Transverse colon (tissue), 4 donors: ENCODE measurements at regions of chr9 and their contacts with region 1.

Region 1: GRCh38 chr9:21812946-21813568 is 10.6 kb downstream of the MTAP start:
- DNase-seq: peak; percentile 80
- H3K4me3 ChIP-seq: no peak overlapping the region
- H3K27ac ChIP-seq: peak overlapping the region in 2 of 4 donors; percentile 3 to 13
- H3K4me1 ChIP-seq: peaks cover 0 to 13% (median 6%) of the 10 kb centered on the region in 4 donors
- H3K27me3 ChIP-seq: no peaks in the 10 kb centered on the region
- CTCF ChIP-seq: peak; percentile 85 to 90 (median 87)
- EP300 ChIP-seq: no peak
- POLR2A ChIP-seq: no peak

Region 2: DNA sequence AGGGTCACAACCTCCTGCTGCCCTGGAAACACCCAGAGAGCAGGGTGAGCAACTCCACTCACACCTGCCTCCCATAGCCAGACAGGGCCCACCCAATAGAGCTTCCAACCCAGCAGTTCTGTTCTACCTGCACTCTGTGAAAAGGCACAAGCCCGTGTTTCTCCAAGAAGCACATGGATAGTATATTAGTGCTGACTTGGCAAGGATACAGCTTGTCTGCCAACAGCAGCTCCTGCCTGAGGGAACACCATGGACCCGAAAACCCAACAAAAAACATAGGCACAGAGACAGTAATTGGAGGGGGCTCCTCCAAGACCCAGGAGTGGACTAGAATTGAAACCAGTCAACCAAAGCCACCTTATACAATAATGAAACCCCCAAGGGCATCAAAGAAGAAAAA is 132.5 kb after region 1 on chr9:
- in situ Hi-C with region 1: no loop called
- intact Hi-C with region 1: no loop called
- DNase-seq: no peak
- H3K4me3 ChIP-seq: no peak overlapping the region
- H3K27ac ChIP-seq: no peak overlapping the region
- H3K4me1 ChIP-seq: peaks cover 0 to 5% (median 2%) of the 10 kb centered on the region in 4 donors
- H3K27me3 ChIP-seq: peaks cover 43% of the 10 kb centered on the region
- CTCF ChIP-seq: no peak
- EP300 ChIP-seq: no peak
- POLR2A ChIP-seq: no peak

Region 3: GRCh38 chr9:22008736-22009562 is 195.9 kb after region 1 on chr9 and contains the start of gene CDKN2B:
- in situ Hi-C with region 1: loop called (anchors 10 to 25 kb)
- intact Hi-C with region 1: no loop called
- DNase-seq: peak; percentile 97
- H3K4me3 ChIP-seq: peak within 1 kb of the TSS; percentile 55 to 76 (median 66)
- H3K27ac ChIP-seq: peak within 1 kb of the TSS; percentile 90 to 95 (median 93)
- H3K4me1 ChIP-seq: peaks cover 0 to 34% (median 8%) of the 10 kb centered on the region in 4 donors
- H3K27me3 ChIP-seq: peaks cover 53% of the 10 kb centered on the region
- CTCF ChIP-seq: peak; percentile 88 to 98 (median 97)
- EP300 ChIP-seq: no peak
- POLR2A ChIP-seq: peak; percentile 95
- total RNA-seq, gene CDKN2B: 36.8 to 430 (median 265) TPM

Region 4: DNA sequence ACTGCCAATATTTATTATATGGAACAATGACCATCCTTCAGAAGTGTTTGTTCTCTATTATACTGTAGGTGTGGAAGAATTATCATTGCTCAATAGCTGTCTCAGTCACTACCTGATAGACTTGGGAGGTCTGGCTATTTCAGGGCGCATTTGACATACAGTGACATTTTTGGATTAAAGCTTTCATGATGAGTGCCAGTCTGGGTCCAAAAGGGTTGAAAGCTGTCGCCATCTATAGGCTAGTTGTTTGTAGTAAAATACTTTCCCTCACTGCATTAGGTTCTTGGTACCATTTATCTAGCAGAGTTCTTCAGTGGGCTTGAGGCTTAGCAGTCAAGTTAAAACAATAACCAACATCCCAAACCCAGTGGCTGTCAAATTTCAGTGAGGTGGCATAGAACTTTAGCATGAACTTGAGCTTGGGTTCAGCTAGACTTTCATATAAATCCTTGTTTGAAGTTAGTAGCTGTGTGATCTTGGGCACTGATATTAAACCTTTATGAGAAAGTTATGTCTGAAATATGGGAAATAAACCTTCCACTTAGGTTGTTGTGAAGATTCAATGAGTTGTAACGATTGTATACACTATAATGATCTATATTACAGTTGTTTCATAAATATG is 306.6 kb after region 1 on chr9:
- in situ Hi-C with region 1: loop called in 1 of 4 experiments (anchors 10 kb)
- intact Hi-C with region 1: no loop called
- DNase-seq: no peak
- H3K4me3 ChIP-seq: no peak overlapping the region
- H3K27ac ChIP-seq: peak overlapping the region in 3 of 4 donors; percentile 79 to 83 (median 83)
- H3K4me1 ChIP-seq: peaks cover 4 to 50% (median 21%) of the 10 kb centered on the region in 4 donors
- H3K27me3 ChIP-seq: no peaks in the 10 kb centered on the region
- CTCF ChIP-seq: peak in 4 of 5 experiments; percentile 27 to 43 (median 34)
- EP300 ChIP-seq: no peak
- POLR2A ChIP-seq: no peak

Region 5: DNA sequence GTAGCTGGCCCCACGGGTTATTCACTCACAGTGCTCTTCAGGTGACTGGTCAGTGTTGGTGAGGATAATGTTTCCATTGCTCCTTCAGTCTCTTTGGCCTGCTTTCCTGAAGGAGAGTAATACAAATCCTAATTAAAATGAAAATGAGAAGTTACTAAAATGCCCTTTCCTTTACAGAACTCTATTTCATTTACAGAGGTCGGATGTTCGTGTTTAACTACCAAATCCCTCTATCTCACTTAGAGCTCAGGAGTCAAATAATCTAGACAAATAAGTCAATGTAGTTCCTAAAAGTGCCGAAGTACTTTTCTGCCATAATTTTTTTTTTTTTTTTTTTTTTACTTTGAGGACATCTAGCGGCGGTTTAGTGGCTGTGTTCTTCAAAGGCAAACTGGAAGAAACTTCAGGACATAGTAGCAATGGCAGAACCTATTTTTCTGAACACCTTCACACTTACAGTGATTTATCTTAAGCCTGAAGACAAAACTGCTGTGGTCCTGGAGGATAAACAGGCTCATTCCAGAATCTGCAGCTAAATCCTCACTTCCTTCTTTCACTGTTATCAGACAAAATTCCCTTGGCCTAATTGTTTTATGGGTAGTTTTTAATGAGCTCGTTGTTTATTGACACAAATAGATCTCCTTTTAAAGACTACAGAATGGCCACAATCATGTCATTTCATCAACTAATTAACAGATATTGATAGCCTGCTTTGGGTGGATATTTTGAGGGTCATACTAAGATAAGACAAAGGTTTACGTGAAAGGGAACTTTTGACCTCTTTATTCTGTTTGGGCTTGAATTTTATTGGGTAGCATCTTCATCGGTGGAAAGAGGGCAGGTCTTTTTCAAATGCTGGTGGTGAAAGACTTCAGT is 426.0 kb after region 1 on chr9:
- in situ Hi-C with region 1: loop called (anchors 5 to 10 kb)
- intact Hi-C with region 1: loop called (anchors 5 kb)
- DNase-seq: no peak
- H3K4me3 ChIP-seq: no peak overlapping the region
- H3K27ac ChIP-seq: no peak overlapping the region
- H3K4me1 ChIP-seq: peaks cover 0 to 6% (median 0%) of the 10 kb centered on the region in 4 donors
- H3K27me3 ChIP-seq: no peaks in the 10 kb centered on the region
- CTCF ChIP-seq: peak; percentile 25 to 46 (median 39)
- EP300 ChIP-seq: no peak
- POLR2A ChIP-seq: no peak

Region 6: DNA sequence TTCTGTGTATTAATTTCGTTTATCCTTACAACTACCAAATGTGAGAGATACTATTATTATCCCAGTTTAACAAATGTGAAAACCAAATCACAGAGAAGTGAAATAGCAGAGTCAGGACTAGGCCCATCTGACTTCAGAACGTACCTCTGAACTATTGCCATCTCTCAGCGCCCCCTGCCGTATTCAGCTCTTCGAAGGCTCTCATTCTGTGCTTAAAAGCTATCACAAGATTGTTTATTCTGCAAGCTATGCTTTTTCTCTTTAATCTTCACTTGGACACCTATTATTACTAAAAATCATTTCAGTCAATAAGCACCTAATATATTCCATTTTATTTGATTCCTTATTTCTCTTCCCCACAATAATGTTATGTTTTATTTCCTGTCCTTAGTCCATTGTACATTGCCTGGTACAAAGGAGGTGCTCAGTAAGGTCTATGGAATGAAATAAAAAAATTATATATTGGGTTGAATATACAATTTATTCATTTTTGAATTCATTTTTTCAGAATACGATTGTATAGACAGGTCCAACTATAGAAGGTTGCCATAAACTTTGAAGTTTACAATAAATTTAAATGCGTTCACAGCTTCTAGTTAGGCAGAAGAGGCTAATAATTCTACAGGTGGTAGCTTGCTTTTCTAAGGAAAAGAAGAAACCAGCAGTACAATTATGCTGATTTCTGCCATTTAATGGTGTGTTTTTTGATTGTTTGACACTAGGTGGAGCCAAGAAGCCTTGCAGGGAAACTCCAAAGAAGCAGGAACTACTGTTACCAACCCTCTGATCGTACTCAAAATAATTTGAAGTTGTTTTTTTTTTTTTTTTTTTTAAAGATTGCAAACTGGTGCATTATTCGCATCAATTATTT is 431.3 kb after region 1 on chr9:
- in situ Hi-C with region 1: loop called (anchors 5 to 10 kb)
- intact Hi-C with region 1: loop called (anchors 5 kb)
- DNase-seq: peak; percentile 37
- H3K4me3 ChIP-seq: no peak overlapping the region
- H3K27ac ChIP-seq: no peak overlapping the region
- H3K4me1 ChIP-seq: peaks cover 0 to 3% (median 0%) of the 10 kb centered on the region in 4 donors
- H3K27me3 ChIP-seq: peaks cover 7% of the 10 kb centered on the region
- CTCF ChIP-seq: peak; percentile 32 to 46 (median 39)
- EP300 ChIP-seq: no peak
- POLR2A ChIP-seq: no peak

Region 7: GRCh38 chr9:22446950-22447617 is 634.0 kb after region 1 on chr9:
- in situ Hi-C with region 1: loop called (anchors 10 to 25 kb)
- intact Hi-C with region 1: no loop called
- DNase-seq: peak; percentile 65
- H3K4me3 ChIP-seq: peak overlapping the region; percentile 51 to 92 (median 74)
- H3K27ac ChIP-seq: peak overlapping the region; percentile 84 to 89 (median 86)
- H3K4me1 ChIP-seq: peaks cover 0 to 22% (median 6%) of the 10 kb centered on the region in 4 donors
- H3K27me3 ChIP-seq: peaks cover 53% of the 10 kb centered on the region
- CTCF ChIP-seq: peak in 1 of 5 experiments; percentile 10
- EP300 ChIP-seq: no peak
- POLR2A ChIP-seq: peak; percentile 18

Region 8: DNA sequence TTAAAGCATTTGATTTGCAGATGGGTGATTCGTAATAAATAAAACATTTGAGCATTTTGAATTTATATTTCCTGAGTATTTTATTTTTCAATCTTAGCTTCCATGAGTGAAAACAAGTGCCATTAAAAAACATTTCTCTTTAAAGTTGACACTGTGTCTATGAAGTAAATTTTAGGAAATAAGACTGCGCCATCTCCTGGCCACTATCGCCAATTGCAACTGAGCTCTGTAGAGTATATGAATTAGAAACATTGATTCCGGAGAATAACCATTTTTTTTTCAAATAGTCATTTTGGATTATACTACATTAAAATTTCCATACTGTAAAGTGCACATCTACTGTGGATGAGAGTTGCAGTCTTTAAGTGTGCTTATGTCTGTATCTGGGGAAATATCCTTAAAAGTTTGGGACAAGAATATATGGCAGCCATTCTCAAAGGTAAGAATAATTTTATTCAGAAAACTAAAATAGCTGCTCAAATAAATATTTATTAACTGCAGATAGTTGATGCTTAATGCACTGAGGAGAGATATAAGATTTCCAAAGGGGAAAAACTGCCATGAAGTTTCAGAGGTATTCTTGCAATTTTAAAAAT is 639.5 kb after region 1 on chr9:
- in situ Hi-C with region 1: loop called (anchors 10 to 25 kb)
- intact Hi-C with region 1: no loop called
- DNase-seq: peak; percentile 54
- H3K4me3 ChIP-seq: no peak overlapping the region
- H3K27ac ChIP-seq: no peak overlapping the region
- H3K4me1 ChIP-seq: peaks cover 0 to 12% (median 2%) of the 10 kb centered on the region in 4 donors
- H3K27me3 ChIP-seq: peaks cover 4% of the 10 kb centered on the region
- CTCF ChIP-seq: peak; percentile 72 to 85 (median 82)
- EP300 ChIP-seq: no peak
- POLR2A ChIP-seq: no peak